ENCODE measurements at regions of chr7 and their contacts with region 1.

Region 1: GRCh38 chr7:18320971-18321567 is 174.5 kb upstream of the HDAC9 start:
- DNase-seq: no peak
- ATAC-seq: peak; percentile 61
- H3K4me3 Mint-ChIP-seq: no peak overlapping the region
- H3K27ac Mint-ChIP-seq: no peak overlapping the region
- H3K4me1 Mint-ChIP-seq: no peaks in the 10 kb centered on the region
- H3K27me3 Mint-ChIP-seq: no peaks in the 10 kb centered on the region

Region 2: DNA sequence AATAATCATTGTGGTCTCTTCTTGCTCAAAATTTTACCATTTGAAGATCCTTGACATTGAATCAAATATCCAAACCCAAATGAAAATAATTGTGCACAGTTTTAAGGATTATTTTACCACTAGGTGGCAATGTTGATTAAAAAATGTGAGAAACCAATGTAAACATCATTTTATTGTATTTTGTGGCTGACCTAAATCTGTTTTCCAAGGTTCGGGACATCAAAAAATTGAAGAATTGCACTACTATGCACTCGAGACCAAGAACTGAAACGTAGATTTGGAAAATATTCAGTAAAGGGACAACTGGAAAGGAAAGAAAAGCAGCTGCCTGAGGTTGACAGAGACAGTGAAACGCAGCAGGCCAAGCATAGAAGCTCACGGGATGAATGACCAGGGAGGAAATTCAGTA is 640.1 kb before region 1 on chr7:
- CTCF ChIA-PET with region 1: interaction called, 3 read pairs
- POLR2A ChIA-PET with region 1: no interaction called
- intact Hi-C with region 1: loop called in 1 of 2 experiments (anchors 5 kb)
- DNase-seq: no peak
- ATAC-seq: no peak
- H3K4me3 Mint-ChIP-seq: no peak overlapping the region
- H3K27ac Mint-ChIP-seq: no peak overlapping the region
- H3K4me1 Mint-ChIP-seq: no peaks in the 10 kb centered on the region
- H3K27me3 Mint-ChIP-seq: no peaks in the 10 kb centered on the region

Region 3: GRCh38 chr7:17706734-17707133 is 614.3 kb before region 1 on chr7:
- CTCF ChIA-PET with region 1: interaction called, 4 read pairs
- POLR2A ChIA-PET with region 1: no interaction called
- intact Hi-C with region 1: loop called in 1 of 2 experiments (anchors 2 kb)
- DNase-seq: peak; percentile 55
- ATAC-seq: peak; percentile 71
- H3K4me3 Mint-ChIP-seq: no peak overlapping the region
- H3K27ac Mint-ChIP-seq: no peak overlapping the region
- H3K4me1 Mint-ChIP-seq: no peaks in the 10 kb centered on the region
- H3K27me3 Mint-ChIP-seq: peaks cover under 1% of the 10 kb centered on the region

Region 4: DNA sequence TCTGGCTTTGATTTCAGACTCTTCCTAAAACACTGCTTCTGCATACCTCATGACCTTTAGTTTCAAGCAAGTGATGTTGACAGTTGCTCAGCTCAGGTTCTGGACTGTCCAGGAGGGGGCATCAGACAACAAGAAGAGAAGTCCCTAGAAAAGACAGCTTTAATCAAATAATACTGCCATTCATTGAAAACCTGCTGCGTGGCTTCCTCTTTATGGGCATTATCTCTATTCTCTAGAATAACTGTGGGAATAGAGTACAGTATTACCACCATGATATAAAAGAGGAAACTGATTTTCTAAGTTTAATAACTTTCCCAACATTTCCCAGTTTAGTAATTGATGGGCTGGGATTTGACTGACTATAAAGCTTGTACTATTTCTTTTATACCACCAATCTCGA is 551.2 kb before region 1 on chr7:
- CTCF ChIA-PET with region 1: interaction called, 19 read pairs
- POLR2A ChIA-PET with region 1: no interaction called
- intact Hi-C with region 1: loop called (anchors 1 kb)
- DNase-seq: peak; percentile 75
- ATAC-seq: peak; percentile 64
- H3K4me3 Mint-ChIP-seq: no peak overlapping the region
- H3K27ac Mint-ChIP-seq: no peak overlapping the region
- H3K4me1 Mint-ChIP-seq: peaks cover 3% of the 10 kb centered on the region
- H3K27me3 Mint-ChIP-seq: no peaks in the 10 kb centered on the region

Region 5: DNA sequence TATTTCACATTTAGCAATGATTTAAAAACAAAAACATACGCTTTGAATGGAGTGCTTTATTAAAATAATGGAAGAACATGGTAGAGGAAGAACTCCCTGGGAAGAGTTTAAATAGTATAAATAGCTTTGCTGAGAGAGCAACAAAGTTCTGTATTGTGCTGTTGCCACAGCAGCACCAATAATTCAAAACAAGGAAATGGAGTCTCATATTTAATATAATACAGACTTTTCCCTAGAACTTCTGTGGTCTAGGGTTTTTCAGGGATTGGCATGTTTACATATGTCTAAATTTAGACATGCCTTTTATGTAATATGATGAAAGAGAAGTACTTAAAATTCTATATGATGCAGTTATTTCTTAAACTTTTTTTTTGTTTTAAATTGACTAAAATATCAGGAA is 42.8 kb before region 1 on chr7:
- CTCF ChIA-PET with region 1: no interaction called
- POLR2A ChIA-PET with region 1: no interaction called
- intact Hi-C with region 1: no loop called
- DNase-seq: no peak
- ATAC-seq: no peak
- H3K4me3 Mint-ChIP-seq: no peak overlapping the region
- H3K27ac Mint-ChIP-seq: no peak overlapping the region
- H3K4me1 Mint-ChIP-seq: no peaks in the 10 kb centered on the region
- H3K27me3 Mint-ChIP-seq: no peaks in the 10 kb centered on the region

Region 6: DNA sequence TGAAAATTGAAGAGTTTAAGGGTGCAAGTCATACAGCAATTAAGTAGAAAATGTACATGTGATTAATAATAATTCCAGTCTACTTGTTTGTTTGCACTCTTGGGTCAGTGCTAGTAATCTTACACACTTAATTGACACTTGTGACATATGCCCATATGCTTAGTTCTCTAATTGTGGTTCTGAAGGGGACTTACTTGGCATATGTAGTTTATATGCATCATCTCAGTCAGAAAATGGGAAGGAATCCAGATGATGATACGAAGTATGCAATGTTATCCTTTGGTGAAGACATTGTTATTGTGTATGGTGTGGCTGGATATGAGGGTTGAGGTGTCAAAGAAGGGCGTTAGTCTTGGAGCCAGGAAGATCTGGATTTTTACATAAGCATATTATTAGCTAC is 19.0 kb before region 1 on chr7:
- CTCF ChIA-PET with region 1: no interaction called
- POLR2A ChIA-PET with region 1: no interaction called
- intact Hi-C with region 1: no loop called
- DNase-seq: no peak
- ATAC-seq: no peak
- H3K4me3 Mint-ChIP-seq: no peak overlapping the region
- H3K27ac Mint-ChIP-seq: no peak overlapping the region
- H3K4me1 Mint-ChIP-seq: no peaks in the 10 kb centered on the region
- H3K27me3 Mint-ChIP-seq: no peaks in the 10 kb centered on the region

Measured in activated CD4-positive, alpha-beta T cell treated with anti-CD3 and anti-CD28 coated beads for 36 hours (primary cell).